HEK293 (cell line): ENCODE measurements at regions of chr12 and their contacts with region 1.

Region 1: GRCh38 chr12:52390739-52391617 is 5.5 kb upstream of the KRT84 start:
- H3K4me3 ChIP-seq: no peak overlapping the region
- H3K27ac ChIP-seq: no peak overlapping the region
- H3K4me1 ChIP-seq: no peaks in the 10 kb centered on the region
- CTCF ChIP-seq: peak; percentile 52

Region 2: DNA sequence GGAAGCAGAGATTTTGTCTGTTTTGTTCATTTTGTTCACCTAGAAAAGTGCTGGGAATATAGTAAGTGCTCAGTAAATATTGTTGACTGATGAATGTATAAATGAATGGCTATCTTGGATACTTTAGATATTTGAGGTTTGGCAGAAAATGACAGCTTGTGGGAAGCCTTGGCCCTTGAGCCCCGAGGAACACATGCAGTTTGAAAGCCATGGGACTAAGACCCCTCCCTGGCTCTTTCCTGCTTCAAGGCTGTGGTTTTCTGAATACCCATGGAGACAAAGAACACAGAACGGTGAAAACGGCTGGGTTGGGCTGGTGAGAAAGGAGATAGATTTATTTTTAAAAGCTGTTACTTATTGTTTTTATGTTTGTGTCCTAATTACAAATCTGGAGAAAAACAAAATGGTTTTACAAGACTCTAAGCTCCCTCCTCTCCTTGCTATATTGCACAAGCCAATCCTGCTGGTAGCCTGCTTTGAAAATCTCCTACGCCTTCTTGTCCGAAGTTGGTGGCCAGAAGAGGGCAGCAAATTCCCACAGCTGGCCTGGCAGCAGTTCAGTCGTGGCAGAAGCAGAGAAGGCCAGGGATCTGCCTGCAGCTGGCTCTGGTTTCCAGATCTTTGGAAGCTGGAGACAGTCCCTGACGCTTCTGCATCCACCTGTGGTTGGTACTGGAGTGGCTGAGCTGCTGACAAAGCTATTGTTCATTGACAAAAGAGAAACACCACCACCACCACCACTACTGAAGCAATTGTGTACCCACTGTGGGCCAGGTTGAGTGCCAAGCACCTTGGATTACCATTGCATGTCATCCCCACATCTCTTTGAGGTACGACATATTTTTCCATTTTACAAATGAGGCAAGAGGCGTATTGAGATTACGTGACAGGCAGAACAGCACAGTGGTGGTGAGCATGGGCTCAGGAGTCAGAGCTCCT is 18.5 kb before region 1 on chr12:
- CTCF ChIA-PET with region 1: interaction called, 12 read pairs
- POLR2A ChIA-PET with region 1: no interaction called
- H3K4me3 ChIP-seq: no peak overlapping the region
- H3K27ac ChIP-seq: no peak overlapping the region
- H3K4me1 ChIP-seq: no peaks in the 10 kb centered on the region
- CTCF ChIP-seq: peak; percentile 77

Region 3: GRCh38 chr12:52380271-52380694 is 10.7 kb before region 1 on chr12:
- CTCF ChIA-PET with region 1: interaction called, 19 read pairs
- POLR2A ChIA-PET with region 1: no interaction called
- H3K4me3 ChIP-seq: no peak overlapping the region
- H3K27ac ChIP-seq: no peak overlapping the region
- H3K4me1 ChIP-seq: no peaks in the 10 kb centered on the region
- CTCF ChIP-seq: peak; percentile 19; the same call in 1 of the 2 replicates

Region 4: GRCh38 chr12:52404956-52405355 is 14.0 kb after region 1 on chr12:
- CTCF ChIA-PET with region 1: interaction called, 26 read pairs
- POLR2A ChIA-PET with region 1: no interaction called
- H3K4me3 ChIP-seq: no peak overlapping the region
- H3K27ac ChIP-seq: no peak overlapping the region
- H3K4me1 ChIP-seq: no peaks in the 10 kb centered on the region
- CTCF ChIP-seq: peak; percentile 46

Region 5: GRCh38 chr12:52413788-52414345 is 22.9 kb after region 1 on chr12:
- CTCF ChIA-PET with region 1: interaction called, 11 read pairs
- POLR2A ChIA-PET with region 1: no interaction called
- H3K4me3 ChIP-seq: no peak overlapping the region
- H3K27ac ChIP-seq: no peak overlapping the region
- H3K4me1 ChIP-seq: no peaks in the 10 kb centered on the region
- CTCF ChIP-seq: no peak

Region 6: GRCh38 chr12:52582971-52583456 is 192.0 kb after region 1 on chr12:
- CTCF ChIA-PET with region 1: interaction called, 10 read pairs
- POLR2A ChIA-PET with region 1: interaction called, 5 read pairs
- H3K4me3 ChIP-seq: no peak overlapping the region
- H3K27ac ChIP-seq: no peak overlapping the region
- H3K4me1 ChIP-seq: no peaks in the 10 kb centered on the region
- CTCF ChIP-seq: peak; percentile 68